ENCODE measurements at regions of chr12 and their contacts with region 1.

Region 1: DNA sequence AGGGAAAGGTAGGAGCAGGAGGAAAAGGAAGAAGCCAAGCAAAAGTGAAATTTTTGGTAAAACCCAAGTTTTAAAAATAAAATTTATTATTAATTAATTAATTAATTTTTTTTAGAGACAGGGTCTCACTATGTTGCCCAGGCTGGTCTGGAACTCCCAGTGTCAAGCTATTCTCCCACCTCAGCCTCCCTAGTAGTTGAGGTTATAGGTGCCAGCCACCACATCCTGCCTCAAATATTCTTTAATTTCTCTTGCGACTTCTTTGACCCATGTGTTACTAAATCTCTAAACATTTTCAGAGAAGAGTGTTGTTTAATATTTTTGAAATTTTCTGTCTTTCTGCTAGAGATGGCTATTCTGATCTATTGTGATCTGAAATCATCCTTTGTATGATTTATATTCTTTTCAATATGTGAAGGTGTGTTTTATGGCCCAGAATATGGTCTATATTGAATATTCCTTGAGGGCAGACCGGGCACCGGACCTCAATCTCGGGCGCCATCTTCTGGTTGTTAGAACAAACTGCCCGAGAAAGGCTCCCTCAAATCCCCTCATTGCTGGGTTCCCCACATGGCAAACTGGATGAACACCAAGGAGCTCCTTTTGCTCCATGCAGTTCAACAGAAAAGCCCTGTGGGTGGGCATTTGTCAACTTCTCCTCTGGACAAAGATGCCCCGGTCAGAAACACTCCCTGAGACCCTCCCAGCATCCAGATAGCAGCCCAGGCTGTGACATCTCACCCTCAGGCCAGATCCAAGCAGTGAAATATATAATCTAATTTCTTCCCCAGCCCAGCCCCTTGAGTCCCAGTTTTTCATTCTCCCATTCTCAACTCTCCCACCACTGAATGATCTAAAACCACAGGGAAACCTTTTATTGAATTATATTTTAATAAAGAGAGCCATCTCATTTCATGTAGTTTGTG is 110.5 kb downstream of the ASCL4 start:
- DNase-seq: no peak
- ATAC-seq: no peak
- H3K4me3 ChIP-seq: no peak overlapping the region
- H3K27ac ChIP-seq: no peak overlapping the region
- H3K4me1 ChIP-seq: no peaks in the 10 kb centered on the region
- H3K27me3 ChIP-seq: no peaks in the 10 kb centered on the region

Region 2: DNA sequence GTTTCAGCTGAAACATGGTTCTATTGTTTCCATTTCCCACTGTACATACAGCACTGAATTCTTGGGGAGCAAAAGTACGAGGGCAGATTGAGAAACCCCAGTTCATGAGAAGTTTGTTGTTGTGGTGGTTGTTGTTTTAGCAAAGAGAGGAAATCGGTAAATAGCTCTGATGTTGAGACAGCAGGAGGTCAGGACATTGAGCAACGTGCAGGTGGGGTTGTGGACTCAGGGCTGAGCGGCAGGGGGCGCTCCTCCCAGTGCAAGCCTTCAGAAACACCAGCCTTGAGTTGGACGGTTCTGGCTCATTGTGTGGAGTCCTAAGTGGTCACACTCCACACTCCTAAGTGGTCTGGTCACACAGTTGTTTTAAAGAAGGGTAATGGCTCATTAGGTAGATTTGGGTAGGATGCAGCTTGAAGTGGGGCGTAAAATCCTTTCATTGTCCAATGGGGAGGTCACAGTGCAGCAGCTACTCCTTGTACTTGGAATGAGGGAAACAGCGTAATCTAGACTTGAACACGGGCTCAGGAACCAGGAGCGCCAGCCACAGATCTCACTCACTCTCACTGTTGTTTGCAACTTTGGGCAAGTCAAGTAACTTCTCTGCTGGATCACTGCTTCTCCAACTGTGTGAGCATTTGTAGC is 213.9 kb before region 1 on chr12:
- intact Hi-C with region 1: loop called (anchors 2 to 10 kb)
- DNase-seq: no peak
- ATAC-seq: no peak
- H3K4me3 ChIP-seq: no peak overlapping the region
- H3K27ac ChIP-seq: no peak overlapping the region
- H3K4me1 ChIP-seq: no peaks in the 10 kb centered on the region
- H3K27me3 ChIP-seq: no peaks in the 10 kb centered on the region

Region 3: GRCh38 chr12:107677671-107678070 is 207.4 kb before region 1 on chr12:
- intact Hi-C with region 1: loop called (anchors 2 to 10 kb)
- DNase-seq: no peak
- ATAC-seq: no peak
- H3K4me3 ChIP-seq: no peak overlapping the region
- H3K27ac ChIP-seq: no peak overlapping the region
- H3K4me1 ChIP-seq: no peaks in the 10 kb centered on the region
- H3K27me3 ChIP-seq: no peaks in the 10 kb centered on the region

Region 4: GRCh38 chr12:107760809-107761501 is 124.1 kb before region 1 on chr12 and contains the start of gene PRDM4:
- intact Hi-C with region 1: loop called in 1 of 2 experiments (anchors 5 kb)
- DNase-seq: peak; percentile 96 to 97
- ATAC-seq: peak; percentile 99
- H3K4me3 ChIP-seq: peak within 1 kb of the TSS; percentile 84 to 93
- H3K27ac ChIP-seq: peak within 1 kb of the TSS in 1 of 2 donors; percentile 34
- H3K4me1 ChIP-seq: peaks cover 3% of the 10 kb centered on the region in 2 donors
- H3K27me3 ChIP-seq: no peaks in the 10 kb centered on the region
- total RNA-seq, gene PRDM4: 26.2 to 26.7 TPM

Measured in aorta (tissue), 5 donors.